GM13976 (cell line): ENCODE measurements at regions of chr14 and their contacts with region 1.

Region 1: GRCh38 chr14:73728717-73729330 is 14.6 kb upstream of the PNMA1 start:
- DNase-seq: peak; percentile 90
- CTCF ChIP-seq: peak; percentile 79

Region 2: DNA sequence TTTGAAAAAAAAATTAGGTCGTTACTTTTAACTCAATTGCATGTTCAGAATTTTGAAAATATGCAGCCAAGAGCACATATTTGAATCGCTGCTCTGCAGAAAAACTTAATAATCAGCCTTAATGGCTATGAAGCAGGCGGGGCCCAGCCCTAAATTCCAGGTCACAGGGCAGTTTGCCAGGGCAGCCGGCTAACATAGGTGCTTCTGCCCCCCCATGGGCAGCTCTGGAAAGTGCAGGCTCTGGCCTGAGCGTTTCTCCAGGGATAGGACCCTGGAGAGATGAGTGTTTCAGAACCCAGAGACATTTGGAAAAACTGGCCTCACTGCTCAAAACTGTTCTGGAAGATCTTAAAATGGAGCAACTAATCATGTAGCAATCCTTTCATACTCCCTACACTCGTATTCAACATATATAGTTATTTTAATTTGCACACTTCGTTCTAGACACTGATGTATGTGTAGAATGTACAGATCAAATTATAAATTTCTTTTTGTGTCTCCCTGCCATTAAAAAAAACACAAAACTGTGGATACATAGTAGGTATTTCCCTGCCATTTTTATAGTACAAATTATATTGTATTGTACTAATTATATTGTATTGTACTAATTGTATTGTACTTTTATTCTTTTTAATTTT is 96.8 kb after region 1 on chr14:
- in situ Hi-C with region 1: loop called (anchors 5 kb)
- DNase-seq: peak; percentile 84
- CTCF ChIP-seq: peak; percentile 73

Region 3: DNA sequence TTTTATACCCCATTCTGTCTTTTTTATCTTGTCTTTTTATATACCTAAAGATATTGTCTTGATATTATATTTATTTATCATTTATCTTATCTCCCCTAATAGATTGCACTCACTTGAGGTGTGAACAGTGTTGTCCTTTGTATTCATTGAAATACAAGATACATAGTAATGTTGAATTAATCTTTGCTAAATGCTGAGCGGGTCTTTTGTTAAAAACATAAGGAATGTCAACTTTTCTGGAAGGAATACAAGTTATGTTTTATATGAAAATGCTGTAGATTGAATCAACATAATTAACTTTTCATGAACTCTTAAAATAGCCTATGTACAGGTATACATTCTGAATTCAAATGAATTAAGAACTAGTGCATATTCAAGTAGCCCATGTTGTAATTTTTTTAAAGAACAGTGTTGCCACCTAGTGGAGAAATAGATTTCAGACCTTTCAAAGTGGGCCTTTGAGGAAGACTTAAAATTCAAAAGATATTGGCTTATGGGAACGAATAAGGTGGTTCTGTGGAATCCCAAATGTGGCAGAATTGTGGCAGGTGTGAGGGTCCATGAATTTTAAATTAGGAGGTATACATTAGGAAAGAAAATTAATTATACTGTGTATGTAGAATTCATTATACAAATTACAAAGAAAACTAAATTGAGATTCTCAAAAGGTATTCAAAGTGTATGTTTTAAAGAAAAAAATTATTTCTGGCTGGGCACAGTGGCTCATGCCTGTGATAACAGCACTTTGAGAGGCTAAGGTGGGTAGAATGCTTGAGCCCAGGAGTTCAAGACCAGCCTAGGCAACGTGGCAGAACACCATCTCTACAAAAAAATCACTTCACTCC is 309.4 kb after region 1 on chr14:
- in situ Hi-C with region 1: loop called (anchors 25 kb)
- DNase-seq: peak; percentile 59
- CTCF ChIP-seq: peak; percentile 40